ENCODE measurements at regions of chr10 and their contacts with region 1.

Region 1: DNA sequence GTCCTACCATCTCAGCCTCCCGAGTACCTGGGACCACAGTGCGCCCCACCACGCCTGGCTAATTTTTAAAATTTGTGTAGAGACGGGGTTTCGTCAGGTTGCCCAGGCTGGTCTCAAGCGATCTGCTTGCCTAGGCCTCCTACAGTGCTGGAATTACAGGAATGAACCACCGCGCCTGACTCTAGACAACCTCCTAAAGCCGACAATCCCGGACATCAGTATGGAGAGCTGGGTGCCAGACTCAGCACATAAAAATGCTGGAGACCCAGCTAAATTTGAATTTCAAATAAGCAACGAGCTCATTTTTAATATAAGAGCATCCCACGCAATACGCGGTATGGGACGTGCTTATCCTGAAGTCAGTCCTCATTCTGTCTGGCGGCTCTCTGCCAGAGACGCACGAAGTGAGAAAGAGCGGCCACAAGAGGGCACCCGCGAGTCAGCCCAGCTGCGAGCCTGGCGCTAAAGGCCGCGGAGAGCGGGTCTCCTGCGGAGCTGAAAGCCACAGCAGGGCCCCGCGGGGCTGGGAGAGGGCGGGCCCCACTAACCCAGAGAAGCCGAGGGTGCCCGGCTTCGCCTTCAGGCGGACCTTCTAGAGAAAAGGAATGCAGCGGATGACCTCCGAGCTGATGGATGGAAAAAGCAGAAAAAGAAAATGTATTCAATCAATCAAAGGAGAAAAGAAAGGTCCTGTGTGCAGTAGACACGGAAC is 7.0 kb downstream of the CALY start:
- DNase-seq: peak; percentile 72 to 98 (median 90)

Region 2: GRCh38 chr10:133373104-133373624 is 43.5 kb after region 1 on chr10 and contains the start of gene ECHS1:
- intact Hi-C with region 1: loop called (anchors 5 kb)
- DNase-seq: peak; percentile 87 to 99 (median 96)